Posterior cingulate gyrus (tissue), 11 donors: ENCODE measurements at regions of chr16 and their contacts with region 1.

Region 1: GRCh38 chr16:31502981-31503380 is 5.2 kb downstream of the RUSF1 start:
- DNase-seq: no peak

Region 2: DNA sequence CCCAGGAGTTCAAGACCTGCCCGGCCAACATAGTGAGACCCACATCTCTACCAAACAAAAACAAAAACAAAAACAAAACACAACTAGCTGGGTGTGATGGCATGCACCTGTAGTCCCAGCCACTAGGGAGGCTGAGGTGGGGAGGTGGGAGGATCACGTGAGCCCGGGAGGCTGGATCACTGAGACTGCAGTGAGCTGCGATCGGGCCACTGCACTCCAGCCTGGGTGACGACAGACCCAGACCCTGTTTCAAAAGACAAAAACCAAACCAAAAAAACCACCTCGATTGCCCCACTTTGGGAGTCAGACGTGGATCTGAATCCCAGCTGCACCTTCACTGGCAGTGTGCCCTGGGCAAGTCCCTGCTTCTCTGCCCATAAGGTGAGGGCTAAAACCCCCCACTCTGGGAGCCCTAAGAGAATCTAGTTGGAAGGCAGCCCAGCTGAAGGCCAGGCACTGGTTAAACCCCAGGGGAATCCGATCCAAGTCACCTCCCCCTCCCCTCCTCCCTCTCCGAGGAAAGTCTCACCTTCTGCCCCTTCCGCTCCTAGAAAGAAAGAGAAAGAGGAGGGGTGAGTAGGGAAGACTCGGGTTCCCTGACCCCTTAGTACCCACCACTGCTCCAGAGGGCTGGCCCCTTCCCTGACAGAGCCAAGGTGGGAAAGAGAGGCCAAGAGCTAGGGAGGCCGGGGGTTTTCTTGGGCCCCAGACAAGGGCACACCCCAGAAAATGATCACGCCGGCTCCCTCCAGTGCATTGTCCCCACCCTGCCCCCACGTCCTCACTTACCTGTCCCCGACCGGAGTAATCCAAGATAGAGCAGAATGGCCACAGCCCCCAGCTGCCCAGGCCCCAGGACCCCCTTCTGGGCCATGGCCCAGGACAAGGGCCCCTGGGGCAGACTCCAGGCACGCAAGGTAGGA is 368.1 kb before region 1 on chr16:
- intact Hi-C with region 1: loop called (anchors 5 kb)
- DNase-seq: no peak